Endothelial cell of umbilical vein (primary cell): ENCODE measurements at regions of chr18 and their contacts with region 1.

Region 1: DNA sequence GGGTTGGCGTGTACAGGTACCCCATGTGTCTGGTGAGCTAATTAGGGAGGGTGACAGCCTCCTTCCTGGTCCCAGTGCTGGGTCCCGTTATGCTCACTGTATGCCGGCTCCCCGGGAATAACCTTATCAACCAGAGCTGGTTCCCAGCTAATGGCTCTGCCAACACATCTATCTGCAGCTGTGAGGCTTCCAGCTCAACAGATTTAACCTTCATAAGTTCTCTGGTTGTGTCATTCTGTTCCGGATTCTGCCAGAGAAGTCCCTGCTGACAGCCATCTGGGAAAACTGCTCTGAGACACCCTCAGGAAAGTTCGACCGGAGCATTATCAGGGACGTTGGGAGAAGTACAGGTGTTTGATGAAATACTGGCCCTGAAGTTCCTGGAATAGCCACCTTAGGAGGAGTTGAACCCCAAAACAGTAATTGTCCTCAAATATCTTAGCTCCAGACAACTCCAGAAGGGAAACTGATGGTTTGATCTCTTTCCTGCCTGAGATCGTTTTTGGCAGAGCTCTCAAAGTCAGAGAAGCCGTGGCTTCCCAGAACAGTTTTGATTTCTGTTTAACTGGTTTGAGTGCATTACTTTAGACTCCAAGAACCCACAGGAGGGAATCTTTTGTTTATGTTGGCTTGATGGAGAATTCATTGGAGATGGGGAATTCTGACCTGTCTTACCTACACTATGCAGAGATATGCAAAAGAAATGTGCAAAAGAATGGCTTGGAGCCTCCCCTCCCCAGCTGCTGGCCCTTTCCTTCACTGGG is 39.4 kb upstream of the TXNDC2 start:
- DNase-seq: peak; percentile 43
- H3K4me3 ChIP-seq: no peak overlapping the region
- H3K27ac ChIP-seq: no peak overlapping the region
- H3K4me1 ChIP-seq: peaks cover 11% of the 10 kb centered on the region
- H3K27me3 ChIP-seq: no peaks in the 10 kb centered on the region
- CTCF ChIP-seq: no peak
- POLR2A ChIP-seq: no peak

Region 2: DNA sequence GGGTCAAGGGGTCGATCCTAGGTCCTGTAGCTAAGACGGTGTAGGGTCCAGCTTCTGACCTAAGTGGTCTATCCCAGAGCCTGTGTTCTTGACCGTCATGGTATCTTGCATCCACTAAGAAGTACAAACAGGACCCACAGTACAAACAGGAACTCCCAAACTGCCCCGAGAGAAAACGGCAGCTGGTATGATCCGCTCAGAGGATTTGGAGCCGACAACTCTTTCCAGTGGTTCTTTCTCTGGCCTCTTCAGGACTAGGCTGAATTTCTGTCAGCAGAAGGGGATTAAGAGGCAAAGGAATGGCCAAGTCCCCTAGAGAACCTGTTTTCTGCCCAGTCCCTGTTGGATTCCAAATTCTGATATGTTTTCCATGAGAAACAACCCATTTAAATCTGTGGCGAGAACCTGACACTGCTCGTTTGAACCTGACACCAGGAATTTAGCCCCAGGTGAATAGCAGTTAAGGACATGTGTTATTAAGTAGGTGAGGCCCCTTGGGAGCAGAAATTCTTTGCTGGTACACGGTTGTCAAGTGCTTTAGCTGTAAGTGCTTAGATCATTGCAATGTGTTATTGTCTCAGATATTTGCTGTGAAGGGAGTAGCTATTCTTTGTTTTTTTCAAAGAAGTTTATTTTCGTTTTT is 11.1 kb before region 1 on chr18:
- CTCF ChIA-PET with region 1: interaction called, 10 read pairs
- POLR2A ChIA-PET with region 1: no interaction called
- dilution Hi-C with region 1: no loop called
- intact Hi-C with region 1: no loop called
- DNase-seq: no peak
- H3K4me3 ChIP-seq: no peak overlapping the region
- H3K27ac ChIP-seq: no peak overlapping the region
- H3K4me1 ChIP-seq: no peaks in the 10 kb centered on the region
- H3K27me3 ChIP-seq: no peaks in the 10 kb centered on the region
- CTCF ChIP-seq: no peak
- POLR2A ChIP-seq: no peak